ENCODE measurements at regions of chr7 and their contacts with region 1.

Region 1: DNA sequence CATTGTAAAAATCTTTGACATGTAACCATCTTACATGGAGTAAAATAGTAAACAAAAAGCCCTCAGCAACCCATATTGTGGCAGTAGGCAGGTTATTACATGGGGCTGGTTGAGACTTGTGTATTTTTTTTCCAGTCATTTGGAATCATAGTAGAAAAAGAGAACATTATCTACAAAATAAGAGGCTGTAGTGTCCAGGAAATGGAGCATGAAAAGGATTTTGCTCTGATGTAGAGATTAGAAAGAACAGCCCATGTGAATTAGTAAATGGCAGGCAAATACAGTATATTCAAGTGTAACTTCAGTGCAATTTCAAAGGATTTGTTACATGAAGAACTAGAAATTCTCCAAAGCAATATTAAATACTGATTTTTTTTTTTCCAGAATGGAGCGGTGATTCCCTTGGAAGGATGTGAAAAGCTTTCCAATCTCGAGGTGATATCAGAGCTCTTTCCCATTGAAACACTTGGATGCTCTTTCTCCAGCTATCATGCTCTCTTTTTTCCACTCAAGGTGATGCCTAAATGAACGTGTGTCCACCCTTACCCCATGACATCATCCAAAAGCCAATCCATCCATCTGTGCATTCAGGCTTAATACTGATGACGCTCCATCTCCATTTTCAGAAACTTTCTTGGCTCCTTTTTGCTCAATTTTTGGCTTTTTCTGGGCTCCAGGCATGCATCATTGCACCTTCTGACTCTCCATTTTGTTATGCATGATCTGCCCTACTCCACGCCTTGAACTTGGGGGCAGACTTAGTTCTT is 1034.7 kb downstream of the TYW1 start:
- DNase-seq: no peak
- ATAC-seq: no peak
- H3K4me3 ChIP-seq: no peak overlapping the region
- H3K4me3 Mint-ChIP-seq: no peak overlapping the region
- H3K27ac ChIP-seq: no peak overlapping the region
- H3K27ac Mint-ChIP-seq: no peak overlapping the region
- H3K4me1 ChIP-seq: no peaks in the 10 kb centered on the region
- H3K4me1 Mint-ChIP-seq: no peaks in the 10 kb centered on the region
- H3K27me3 ChIP-seq: no peaks in the 10 kb centered on the region
- H3K27me3 Mint-ChIP-seq: no peaks in the 10 kb centered on the region
- CTCF ChIP-seq: no peak

Region 2: GRCh38 chr7:68739306-68739705 is 707.9 kb after region 1 on chr7:
- intact Hi-C with region 1: loop called (anchors 5 kb)
- DNase-seq: no peak
- ATAC-seq: no peak
- H3K4me3 ChIP-seq: no peak overlapping the region
- H3K4me3 Mint-ChIP-seq: no peak overlapping the region
- H3K27ac ChIP-seq: no peak overlapping the region
- H3K27ac Mint-ChIP-seq: no peak overlapping the region
- H3K4me1 ChIP-seq: no peaks in the 10 kb centered on the region
- H3K4me1 Mint-ChIP-seq: no peaks in the 10 kb centered on the region
- H3K27me3 ChIP-seq: no peaks in the 10 kb centered on the region
- H3K27me3 Mint-ChIP-seq: no peaks in the 10 kb centered on the region
- CTCF ChIP-seq: no peak

Measured in natural killer cell (primary cell).